Naive thymus-derived CD4-positive, alpha-beta T cell (primary cell): ENCODE measurements at regions of chr1 and their contacts with region 1.

Region 1: DNA sequence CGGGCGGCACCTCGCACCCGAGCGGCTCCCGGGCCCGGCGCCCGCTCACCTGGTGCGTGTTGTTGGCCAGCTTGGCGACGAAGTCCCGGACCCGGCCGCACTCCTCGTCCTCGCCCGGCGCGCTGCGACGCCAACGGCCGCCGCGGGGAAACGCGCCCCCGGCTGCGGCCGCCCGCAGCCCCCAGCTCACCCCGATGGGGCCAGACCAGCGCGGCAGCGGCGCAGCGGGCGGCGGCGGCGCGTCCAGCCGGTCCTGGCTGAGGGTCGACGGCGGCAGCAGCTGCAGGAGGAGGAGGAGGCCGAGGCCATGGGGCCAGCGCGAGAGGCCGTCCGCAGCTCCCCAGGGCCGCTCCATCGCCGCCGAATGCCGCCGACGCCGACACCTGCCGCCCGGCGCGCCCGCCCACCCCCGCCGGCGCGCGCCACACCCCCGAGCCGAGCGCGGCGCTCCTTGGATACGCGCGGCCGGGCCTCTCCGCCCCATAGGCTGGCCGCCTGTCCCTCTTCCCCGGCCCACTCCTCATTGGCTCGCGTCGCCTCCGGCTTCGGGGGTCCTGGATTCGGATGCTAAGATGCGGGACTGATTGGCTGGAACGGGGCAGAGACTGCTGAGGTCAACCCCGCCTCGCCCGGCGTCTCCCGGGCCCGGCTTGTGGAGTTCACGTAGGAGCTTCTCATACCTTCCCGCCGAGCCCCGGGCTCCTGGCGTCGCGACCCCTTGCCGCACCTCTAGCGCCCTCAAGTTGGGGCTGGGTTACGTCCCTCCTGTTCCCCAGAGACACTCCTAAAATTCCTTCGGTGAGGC is at the start of gene SORT1:
- DNase-seq: peak; percentile 29 to 67 (median 43)
- ATAC-seq: peak; percentile 94
- H3K4me3 ChIP-seq: peak within 1 kb of the TSS; percentile 37
- H3K4me3 Mint-ChIP-seq: peak within 1 kb of the TSS; percentile 80 to 90 (median 86)
- H3K27ac ChIP-seq: no peak within 1 kb of the TSS
- H3K27ac Mint-ChIP-seq: peak within 1 kb of the TSS in 2 of 9 donors; percentile 43 to 74
- H3K4me1 ChIP-seq: peaks cover 0 to 6% of the 10 kb centered on the region in 2 donors
- H3K4me1 Mint-ChIP-seq: peaks cover 0 to 30% (median 16%) of the 10 kb centered on the region in 7 donors
- H3K27me3 ChIP-seq: peaks cover 0 to 18% of the 10 kb centered on the region in 2 donors
- H3K27me3 Mint-ChIP-seq: peaks cover 36 to 51% (median 41%) of the 10 kb centered on the region in 5 donors
- total RNA-seq, gene SORT1: 1.0 to 25.6 (median 1.8) TPM

Region 2: DNA sequence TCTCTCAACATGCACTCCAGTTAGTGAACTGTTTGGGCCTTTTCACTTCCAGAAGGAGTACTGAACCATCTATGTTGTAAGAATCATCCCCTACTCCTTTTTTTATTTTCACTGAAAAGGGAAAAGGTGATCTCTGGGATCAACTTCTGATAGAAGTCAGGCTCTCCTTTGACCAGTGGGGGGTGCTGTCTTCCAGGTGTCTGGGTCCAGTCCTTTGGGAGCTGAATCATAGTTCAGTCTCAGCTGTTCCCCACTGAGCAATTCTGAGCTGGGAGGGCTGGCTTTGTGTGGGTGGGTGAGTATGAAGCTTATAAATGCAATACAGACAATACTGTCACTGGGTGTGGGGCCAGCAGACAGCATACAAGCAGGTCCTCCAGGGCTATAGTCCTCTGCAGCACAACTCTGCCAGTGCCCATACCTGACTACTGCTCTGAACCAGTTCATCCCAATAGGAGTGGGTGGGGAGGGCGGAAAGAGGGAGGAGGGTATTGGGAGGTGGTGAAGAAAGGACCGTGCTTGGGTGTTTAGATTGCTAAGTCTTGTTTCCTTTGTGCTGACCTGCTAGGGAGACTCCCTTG is 196.5 kb before region 1 on chr1:
- CTCF ChIA-PET with region 1: interaction called, 3 read pairs
- POLR2A ChIA-PET with region 1: no interaction called
- intact Hi-C with region 1: loop called in 1 of 2 experiments (anchors 1 kb)
- DNase-seq: peak in 3 of 9 donors; percentile 11 to 60 (median 17)
- ATAC-seq: no peak
- H3K4me3 ChIP-seq: no peak overlapping the region
- H3K4me3 Mint-ChIP-seq: no peak overlapping the region
- H3K27ac ChIP-seq: no peak overlapping the region
- H3K27ac Mint-ChIP-seq: peak overlapping the region in 2 of 9 donors; percentile 26 to 35
- H3K4me1 ChIP-seq: peaks cover 0 to 12% of the 10 kb centered on the region in 2 donors
- H3K4me1 Mint-ChIP-seq: peaks cover 5 to 28% (median 19%) of the 10 kb centered on the region in 7 donors
- H3K27me3 ChIP-seq: no peaks in the 10 kb centered on the region
- H3K27me3 Mint-ChIP-seq: no peaks in the 10 kb centered on the region

Region 3: GRCh38 chr1:109277434-109278204 is 120.1 kb before region 1 on chr1:
- CTCF ChIA-PET with region 1: interaction called, 62 read pairs
- POLR2A ChIA-PET with region 1: interaction called, 5 read pairs
- intact Hi-C with region 1: loop called (anchors 1 kb)
- DNase-seq: peak in 7 of 9 donors; percentile 20 to 72 (median 35)
- ATAC-seq: peak; percentile 77
- H3K4me3 ChIP-seq: no peak overlapping the region
- H3K4me3 Mint-ChIP-seq: no peak overlapping the region
- H3K27ac ChIP-seq: no peak overlapping the region
- H3K27ac Mint-ChIP-seq: peak overlapping the region in 1 of 9 donors; percentile 44
- H3K4me1 ChIP-seq: peaks cover 3% of the 10 kb centered on the region in 2 donors
- H3K4me1 Mint-ChIP-seq: peaks cover 0 to 26% (median 10%) of the 10 kb centered on the region in 7 donors
- H3K27me3 ChIP-seq: no peaks in the 10 kb centered on the region
- H3K27me3 Mint-ChIP-seq: no peaks in the 10 kb centered on the region

Region 4: DNA sequence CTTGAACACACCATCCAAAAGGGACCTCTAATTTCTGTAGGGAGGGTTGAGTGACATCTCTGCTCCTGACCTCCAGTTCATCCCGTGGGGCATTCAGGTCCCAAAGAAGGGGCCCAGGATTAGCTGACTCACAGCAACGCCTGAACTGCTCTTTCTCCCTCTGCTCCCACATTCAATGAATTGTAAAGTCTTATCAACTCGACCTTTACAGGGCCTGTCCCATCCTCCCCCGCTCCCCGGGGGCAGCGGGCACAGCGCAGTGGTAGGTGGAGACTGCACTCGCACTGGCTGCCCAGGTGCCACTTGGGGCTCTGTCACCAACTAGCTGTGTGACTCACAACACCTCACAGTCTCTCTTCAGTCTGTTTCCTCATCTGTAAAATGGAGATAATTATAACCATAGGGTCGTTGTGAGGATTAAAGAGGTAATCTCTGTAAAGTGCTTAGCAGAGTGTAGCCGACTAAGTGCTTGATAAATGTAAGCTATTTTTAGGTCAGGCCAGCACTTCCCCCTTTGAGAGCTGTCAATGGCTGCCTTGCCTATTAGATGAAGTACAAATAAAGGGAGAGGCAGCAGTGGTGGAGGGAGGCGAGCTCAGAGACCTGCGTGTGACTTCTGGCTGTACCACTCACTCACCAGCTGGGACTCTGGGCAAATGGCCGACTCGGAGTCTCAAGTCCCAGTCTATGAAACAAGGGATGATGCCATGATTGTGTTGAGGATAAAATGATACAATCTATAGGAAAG is 90.3 kb before region 1 on chr1:
- CTCF ChIA-PET with region 1: no interaction called
- POLR2A ChIA-PET with region 1: no interaction called
- intact Hi-C with region 1: no loop called
- DNase-seq: no peak
- ATAC-seq: peak; percentile 46
- H3K4me3 ChIP-seq: no peak overlapping the region
- H3K4me3 Mint-ChIP-seq: no peak overlapping the region
- H3K27ac ChIP-seq: no peak overlapping the region
- H3K27ac Mint-ChIP-seq: peak overlapping the region in 1 of 9 donors; percentile 66
- H3K4me1 ChIP-seq: no peaks in the 10 kb centered on the region
- H3K4me1 Mint-ChIP-seq: peaks cover 0 to 2% (median 0%) of the 10 kb centered on the region in 7 donors
- H3K27me3 ChIP-seq: no peaks in the 10 kb centered on the region
- H3K27me3 Mint-ChIP-seq: peaks cover 0 to 14% (median 5%) of the 10 kb centered on the region in 5 donors

Region 5: DNA sequence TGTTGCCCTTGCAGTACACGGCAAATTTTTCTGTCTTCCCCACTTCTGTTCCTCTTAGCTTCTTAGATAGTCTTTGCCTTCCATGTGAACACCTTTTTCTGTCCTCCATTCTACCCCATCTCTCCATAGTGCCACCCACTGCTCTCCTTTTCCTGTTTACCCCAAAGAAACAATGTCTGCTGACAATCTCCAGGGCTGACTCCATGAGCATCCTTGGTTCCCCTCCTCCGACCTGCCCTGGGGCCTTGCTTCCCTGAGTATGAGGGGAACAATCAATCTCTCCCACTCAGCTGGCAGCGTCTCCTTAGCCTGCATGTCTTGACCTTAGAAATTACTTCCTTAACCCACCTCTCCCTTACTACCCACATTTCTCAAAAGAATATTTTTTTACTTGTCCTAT is 78.6 kb before region 1 on chr1:
- CTCF ChIA-PET with region 1: no interaction called
- POLR2A ChIA-PET with region 1: no interaction called
- intact Hi-C with region 1: no loop called
- DNase-seq: no peak
- ATAC-seq: no peak
- H3K4me3 ChIP-seq: no peak overlapping the region
- H3K4me3 Mint-ChIP-seq: no peak overlapping the region
- H3K27ac ChIP-seq: no peak overlapping the region
- H3K27ac Mint-ChIP-seq: no peak overlapping the region
- H3K4me1 ChIP-seq: no peaks in the 10 kb centered on the region
- H3K4me1 Mint-ChIP-seq: no peaks in the 10 kb centered on the region
- H3K27me3 ChIP-seq: no peaks in the 10 kb centered on the region
- H3K27me3 Mint-ChIP-seq: peaks cover 0 to 11% (median 0%) of the 10 kb centered on the region in 5 donors

Region 6: GRCh38 chr1:109357616-109358015 is 40.1 kb before region 1 on chr1:
- CTCF ChIA-PET with region 1: no interaction called
- POLR2A ChIA-PET with region 1: no interaction called
- intact Hi-C with region 1: loop called in 1 of 2 experiments (anchors 5 kb)
- DNase-seq: no peak
- ATAC-seq: no peak
- H3K4me3 ChIP-seq: no peak overlapping the region
- H3K4me3 Mint-ChIP-seq: no peak overlapping the region
- H3K27ac ChIP-seq: no peak overlapping the region
- H3K27ac Mint-ChIP-seq: no peak overlapping the region
- H3K4me1 ChIP-seq: no peaks in the 10 kb centered on the region
- H3K4me1 Mint-ChIP-seq: peaks cover 0 to 19% (median 5%) of the 10 kb centered on the region in 7 donors
- H3K27me3 ChIP-seq: no peaks in the 10 kb centered on the region
- H3K27me3 Mint-ChIP-seq: peaks cover 0 to 55% (median 0%) of the 10 kb centered on the region in 5 donors

Region 7: GRCh38 chr1:109532365-109533136 is 134.8 kb after region 1 on chr1:
- CTCF ChIA-PET with region 1: interaction called, 5 read pairs
- POLR2A ChIA-PET with region 1: interaction called, 3 read pairs
- intact Hi-C with region 1: loop called (anchors 1 to 5 kb)
- DNase-seq: peak; percentile 79 to 96 (median 87)
- ATAC-seq: peak; percentile 94
- H3K4me3 ChIP-seq: peak overlapping the region; percentile 57
- H3K4me3 Mint-ChIP-seq: peak overlapping the region; percentile 78 to 91 (median 86)
- H3K27ac ChIP-seq: no peak overlapping the region
- H3K27ac Mint-ChIP-seq: peak overlapping the region; percentile 66 to 95 (median 86)
- H3K4me1 ChIP-seq: peaks cover 11 to 28% of the 10 kb centered on the region in 2 donors
- H3K4me1 Mint-ChIP-seq: peaks cover 22 to 40% (median 30%) of the 10 kb centered on the region in 7 donors
- H3K27me3 ChIP-seq: no peaks in the 10 kb centered on the region
- H3K27me3 Mint-ChIP-seq: no peaks in the 10 kb centered on the region